Calu3 (cell line): ENCODE measurements at regions of chr4 and their contacts with region 1.

Region 1: DNA sequence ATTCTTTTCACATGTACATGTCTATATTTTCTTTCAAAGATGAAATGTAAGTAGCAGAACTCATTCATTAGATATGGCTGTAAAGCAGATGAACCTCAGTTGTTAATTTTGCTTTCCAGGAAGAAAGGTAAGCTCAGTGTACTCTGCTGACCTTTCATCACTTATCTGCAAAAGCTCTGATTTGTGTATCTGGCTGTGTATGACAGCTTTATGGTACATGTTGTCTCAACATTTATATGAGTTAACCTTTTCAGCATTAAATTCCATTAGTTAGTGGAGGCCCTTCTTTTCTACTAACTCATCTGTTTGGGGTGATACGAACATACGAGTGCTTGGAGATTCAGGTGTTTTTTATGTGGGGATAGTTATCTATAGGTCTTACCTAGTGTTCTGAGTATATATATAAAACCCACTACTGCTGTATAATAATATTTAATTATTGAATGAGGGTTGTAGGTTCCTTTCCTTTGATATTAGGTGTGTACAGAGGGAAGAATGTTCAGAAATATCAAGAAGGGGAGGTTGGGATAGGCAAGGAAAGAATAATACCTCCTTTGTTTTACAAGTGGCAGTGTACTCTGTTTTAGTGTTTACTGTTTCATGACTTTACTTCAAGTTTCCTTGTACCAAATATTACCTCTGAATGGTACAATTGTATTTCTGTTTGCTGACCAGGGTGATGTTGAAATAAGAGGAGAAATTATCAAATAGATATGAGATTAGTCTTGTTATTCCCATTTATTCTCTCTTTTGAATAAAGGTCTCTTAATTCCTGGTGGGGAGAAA is 395.5 kb downstream of the ARHGAP24 start:
- DNase-seq: no peak
- H3K4me3 Mint-ChIP-seq: no peak overlapping the region
- H3K27ac Mint-ChIP-seq: peak overlapping the region; percentile 83
- H3K4me1 Mint-ChIP-seq: peaks cover 8% of the 10 kb centered on the region
- H3K27me3 Mint-ChIP-seq: no peaks in the 10 kb centered on the region
- CTCF ChIP-seq: no peak

Region 2: DNA sequence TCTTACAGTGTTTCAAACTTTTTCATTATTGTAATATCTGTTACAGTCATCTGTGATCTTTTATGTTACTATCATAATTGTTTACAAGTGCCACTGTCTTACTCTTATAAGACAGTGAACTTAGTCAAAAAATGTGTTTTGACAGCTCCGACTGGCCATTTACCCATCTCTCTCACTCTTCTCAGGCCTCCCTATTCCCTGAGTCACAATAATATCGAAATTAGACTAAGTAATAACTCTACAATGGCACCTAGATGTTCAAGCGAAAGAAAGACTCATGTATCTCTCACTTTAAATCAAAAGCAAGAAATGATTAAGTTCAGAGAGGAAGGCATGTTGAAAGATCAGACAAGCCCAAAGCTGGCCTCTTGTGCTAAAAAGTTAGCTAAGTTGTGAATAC is 1103.3 kb before region 1 on chr4:
- CTCF ChIA-PET with region 1: no interaction called
- intact Hi-C with region 1: no loop called
- DNase-seq: no peak
- H3K4me3 Mint-ChIP-seq: no peak overlapping the region
- H3K27ac Mint-ChIP-seq: no peak overlapping the region
- H3K4me1 Mint-ChIP-seq: no peaks in the 10 kb centered on the region
- H3K27me3 Mint-ChIP-seq: no peaks in the 10 kb centered on the region
- CTCF ChIP-seq: no peak

Region 3: DNA sequence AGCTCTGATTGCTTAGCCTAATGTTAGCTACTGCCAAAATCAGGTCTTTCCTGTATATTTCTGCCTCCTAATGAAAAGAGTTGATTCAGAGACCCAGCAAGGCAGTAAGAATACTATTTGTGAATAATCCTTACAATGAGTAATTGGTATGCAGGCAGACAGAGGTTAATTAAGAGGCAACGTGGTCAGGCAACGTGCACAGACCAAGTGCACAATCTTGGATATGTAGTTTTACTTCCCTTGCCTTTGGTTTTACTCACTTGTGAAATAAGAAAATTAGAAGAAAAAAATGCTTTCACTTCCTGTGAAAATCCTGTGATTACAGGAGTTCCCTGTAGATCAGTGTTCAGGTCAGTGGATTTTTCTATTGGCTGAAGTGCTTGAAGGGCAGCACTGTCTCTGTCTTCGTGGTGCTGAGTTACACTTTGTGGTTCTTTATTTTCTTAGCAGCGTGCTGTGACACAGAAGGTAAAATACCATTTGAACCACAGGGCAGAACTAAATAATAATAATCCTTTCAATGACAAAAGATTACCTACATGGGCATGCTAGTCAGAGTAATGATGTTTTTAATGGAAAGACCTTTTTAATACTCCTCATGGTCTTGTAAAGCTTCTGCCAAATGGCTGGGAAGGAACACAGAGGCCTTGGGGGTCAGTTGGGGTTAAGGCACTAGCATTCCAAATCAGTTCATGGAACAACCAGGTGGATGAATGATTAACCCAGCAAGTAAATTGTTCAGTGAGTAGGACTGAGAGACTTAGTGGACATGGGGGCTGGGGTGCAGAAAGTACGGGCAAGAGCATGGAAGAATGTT is 58.5 kb after region 1 on chr4:
- CTCF ChIA-PET with region 1: no interaction called
- intact Hi-C with region 1: loop called (anchors 5 kb)
- DNase-seq: peak; percentile 51
- H3K4me3 Mint-ChIP-seq: peak overlapping the region; percentile 70
- H3K27ac Mint-ChIP-seq: peak overlapping the region; percentile 81
- H3K4me1 Mint-ChIP-seq: peaks cover 31% of the 10 kb centered on the region
- H3K27me3 Mint-ChIP-seq: no peaks in the 10 kb centered on the region
- CTCF ChIP-seq: no peak

Region 4: GRCh38 chr4:85968945-85969819 is 98.7 kb after region 1 on chr4:
- CTCF ChIA-PET with region 1: no interaction called
- intact Hi-C with region 1: loop called (anchors 10 kb)
- DNase-seq: no peak
- H3K4me3 Mint-ChIP-seq: no peak overlapping the region
- H3K27ac Mint-ChIP-seq: no peak overlapping the region
- H3K4me1 Mint-ChIP-seq: peaks cover 6% of the 10 kb centered on the region
- H3K27me3 Mint-ChIP-seq: no peaks in the 10 kb centered on the region
- CTCF ChIP-seq: no peak